Naive thymus-derived CD4-positive, alpha-beta T cell (primary cell): ENCODE measurements at regions of chr1 and their contacts with region 1.

Region 1: DNA sequence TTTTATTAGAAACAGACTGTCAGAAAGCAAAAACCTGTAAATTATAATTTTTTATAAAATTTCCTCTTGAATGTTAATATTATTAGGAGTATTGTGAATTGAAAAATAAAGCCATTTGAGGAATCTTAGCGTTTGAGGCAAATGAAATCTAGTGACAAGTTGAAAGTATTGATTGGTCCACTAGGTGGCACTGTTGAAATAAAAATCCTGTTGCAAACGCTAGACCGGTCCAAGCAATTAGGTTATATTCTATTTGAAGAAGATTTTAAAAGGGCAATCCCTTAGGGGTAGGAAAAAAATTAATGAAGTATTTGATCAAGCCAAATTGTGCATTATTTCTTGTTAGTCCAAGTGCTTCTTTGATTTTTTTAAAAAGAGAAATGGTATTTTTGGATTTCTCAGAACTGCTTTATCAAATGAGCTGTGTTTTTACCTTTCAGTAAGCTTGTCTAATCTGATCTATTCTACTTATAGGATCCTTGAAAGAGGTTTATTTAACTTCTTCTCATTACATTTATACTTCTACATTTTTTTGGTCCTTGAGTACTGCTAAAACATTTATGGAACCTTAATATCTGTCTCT is 57.7 kb downstream of the ATG4C start:
- DNase-seq: peak in 7 of 9 donors; percentile 10 to 56 (median 40)
- ATAC-seq: peak; percentile 67
- H3K4me3 ChIP-seq: no peak overlapping the region
- H3K4me3 Mint-ChIP-seq: no peak overlapping the region
- H3K27ac ChIP-seq: no peak overlapping the region
- H3K27ac Mint-ChIP-seq: no peak overlapping the region
- H3K4me1 ChIP-seq: no peaks in the 10 kb centered on the region
- H3K4me1 Mint-ChIP-seq: no peaks in the 10 kb centered on the region
- H3K27me3 ChIP-seq: no peaks in the 10 kb centered on the region
- H3K27me3 Mint-ChIP-seq: no peaks in the 10 kb centered on the region

Region 2: GRCh38 chr1:62906428-62906886 is 64.8 kb after region 1 on chr1:
- CTCF ChIA-PET with region 1: no interaction called
- POLR2A ChIA-PET with region 1: no interaction called
- intact Hi-C with region 1: loop called in 1 of 2 experiments (anchors 2 kb)
- DNase-seq: no peak
- ATAC-seq: no peak
- H3K4me3 ChIP-seq: no peak overlapping the region
- H3K4me3 Mint-ChIP-seq: no peak overlapping the region
- H3K27ac ChIP-seq: no peak overlapping the region
- H3K27ac Mint-ChIP-seq: no peak overlapping the region
- H3K4me1 ChIP-seq: no peaks in the 10 kb centered on the region
- H3K4me1 Mint-ChIP-seq: peaks cover 0 to 12% (median 10%) of the 10 kb centered on the region in 7 donors
- H3K27me3 ChIP-seq: no peaks in the 10 kb centered on the region
- H3K27me3 Mint-ChIP-seq: peaks cover 0 to 6% (median 0%) of the 10 kb centered on the region in 5 donors

Region 3: DNA sequence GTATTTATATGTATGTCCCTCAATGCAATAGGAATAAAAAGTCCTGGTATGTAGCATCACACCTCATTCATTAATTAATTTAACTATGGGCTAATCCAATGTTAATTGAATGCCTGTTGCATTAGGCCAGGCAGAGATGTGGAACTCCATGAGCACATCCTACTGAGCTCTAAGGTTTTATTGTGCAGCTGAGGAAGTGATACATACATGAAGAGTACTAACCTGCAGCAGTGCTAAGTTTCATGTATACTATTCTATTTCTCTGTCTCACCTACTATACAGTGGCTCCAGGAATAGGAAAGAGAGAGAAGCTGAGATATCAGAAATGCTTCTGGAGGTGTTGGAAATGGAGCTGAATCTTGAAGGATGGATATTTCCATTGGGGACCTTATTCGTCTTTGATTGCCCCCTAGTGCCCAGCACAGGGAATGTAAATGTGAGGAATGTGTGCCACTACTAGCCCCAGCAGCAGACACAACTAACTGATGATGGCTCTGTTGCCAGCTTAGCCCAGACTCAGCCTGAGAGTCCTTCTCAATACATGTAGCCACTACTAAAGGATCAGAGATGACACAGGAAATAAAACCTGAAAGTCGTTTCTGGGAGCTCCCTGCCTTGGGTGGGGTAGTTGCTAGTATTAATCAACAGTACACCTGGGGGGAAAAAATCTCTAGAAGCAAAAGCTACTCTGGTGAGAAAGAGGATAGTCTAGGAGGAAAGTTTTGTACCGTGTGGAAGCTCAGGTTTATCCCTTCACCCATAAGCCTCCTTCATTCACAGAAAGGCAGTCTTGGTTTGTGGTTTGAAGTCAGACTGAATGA is 307.4 kb after region 1 on chr1:
- CTCF ChIA-PET with region 1: no interaction called
- POLR2A ChIA-PET with region 1: no interaction called
- intact Hi-C with region 1: loop called in 1 of 2 experiments (anchors 5 kb)
- DNase-seq: no peak
- ATAC-seq: no peak
- H3K4me3 ChIP-seq: no peak overlapping the region
- H3K4me3 Mint-ChIP-seq: no peak overlapping the region
- H3K27ac ChIP-seq: no peak overlapping the region
- H3K27ac Mint-ChIP-seq: no peak overlapping the region
- H3K4me1 ChIP-seq: no peaks in the 10 kb centered on the region
- H3K4me1 Mint-ChIP-seq: no peaks in the 10 kb centered on the region
- H3K27me3 ChIP-seq: no peaks in the 10 kb centered on the region
- H3K27me3 Mint-ChIP-seq: peaks cover 0 to 31% (median 26%) of the 10 kb centered on the region in 5 donors